Posterior vena cava (tissue), 2 donors: ENCODE measurements at regions of chr7 and their contacts with region 1.

Region 1: GRCh38 chr7:106806556-106806955 is 58.5 kb upstream of the PIK3CG start:
- DNase-seq: no peak

Region 2: DNA sequence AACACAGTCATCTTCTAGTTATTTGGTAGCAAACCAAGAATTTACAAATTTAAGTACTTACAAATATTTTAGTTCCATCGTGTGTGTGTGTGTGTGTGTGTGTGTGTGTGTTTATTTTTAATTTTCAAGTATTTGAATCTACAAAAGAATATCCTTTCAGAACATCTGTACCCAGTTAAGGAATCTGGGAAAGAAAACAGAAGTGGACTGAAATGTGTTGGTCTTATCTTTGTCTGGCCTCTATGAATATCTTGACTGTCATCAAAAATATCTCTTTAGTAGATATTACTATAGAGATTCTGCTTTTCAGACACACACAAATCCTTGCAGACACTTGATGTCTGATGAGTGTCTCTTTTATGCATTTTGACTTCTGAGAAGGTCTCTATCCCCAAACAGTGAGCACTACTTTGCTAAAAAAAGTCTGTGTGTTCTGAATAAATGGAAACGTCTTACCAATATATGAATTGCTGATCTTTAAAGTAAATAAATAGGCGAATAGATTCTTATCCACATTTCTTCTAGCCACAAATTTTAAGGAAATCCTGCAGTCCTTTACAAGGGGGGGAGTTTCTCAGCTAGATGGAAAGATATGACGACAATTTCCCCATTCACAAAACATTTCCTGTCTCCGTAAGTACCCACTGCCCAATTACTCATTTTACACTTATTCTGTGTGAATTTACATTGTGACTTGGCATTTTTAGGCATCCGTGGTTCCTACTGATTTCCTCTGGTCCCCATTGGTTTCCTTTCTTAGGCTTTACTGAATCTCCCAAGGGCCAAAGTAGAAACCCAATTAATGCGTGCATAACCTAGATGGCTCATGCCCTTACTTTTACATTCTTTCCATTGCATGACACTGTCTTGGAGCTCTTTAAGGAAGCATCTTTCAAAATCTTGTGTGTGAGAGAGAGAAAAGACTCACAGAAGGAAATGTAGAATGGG is 1613.7 kb after region 1 on chr7:
- intact Hi-C with region 1: loop called in 1 of 2 experiments (anchors 5 kb)
- DNase-seq: no peak